Posterior cingulate gyrus (tissue), 11 donors: ENCODE measurements at regions of chr9 and their contacts with region 1.

Region 1: GRCh38 chr9:98255578-98256296 is at the start of gene TBC1D2:
- DNase-seq: peak; percentile 89 to 99 (median 93)

Region 2: DNA sequence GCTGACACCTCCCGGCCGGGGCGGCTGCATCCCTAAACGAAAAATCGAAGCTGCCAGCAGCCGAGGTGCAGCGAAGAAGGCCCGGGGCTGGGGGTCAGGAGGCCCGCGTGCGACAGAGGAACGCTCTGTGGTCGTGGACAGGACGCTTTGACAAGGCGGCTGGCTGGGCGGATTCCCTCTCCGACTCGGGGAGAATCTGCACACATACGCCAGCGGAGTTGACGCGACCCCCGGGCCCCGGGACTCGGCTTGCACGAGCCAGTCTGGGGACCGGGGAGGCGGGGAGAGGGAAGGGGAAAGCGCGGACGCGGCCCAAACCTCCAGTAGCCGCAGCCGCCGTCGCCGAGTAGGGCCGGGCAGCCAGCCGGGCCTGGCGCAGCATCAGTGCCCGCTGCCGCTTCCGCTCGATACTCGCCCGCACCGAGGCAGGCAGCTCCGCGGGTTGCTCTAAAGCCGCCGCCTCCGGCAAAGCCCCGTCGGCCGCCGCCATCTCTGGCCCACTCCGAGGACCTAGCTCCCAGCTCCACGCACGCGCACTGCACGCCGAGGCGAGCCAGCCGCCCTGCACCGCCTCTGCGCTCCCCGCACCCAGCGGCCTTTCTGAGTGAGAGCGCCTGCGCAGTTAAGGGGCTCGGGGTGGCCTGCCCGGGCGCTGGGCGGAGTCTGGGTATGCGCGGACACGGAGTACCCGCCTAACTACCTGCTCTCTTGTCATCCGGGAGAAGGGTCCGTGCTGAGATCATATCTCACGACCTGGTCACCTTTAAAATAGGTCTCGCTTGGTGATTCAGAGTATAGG is 558.7 kb before region 1 on chr9 and contains the start of gene XPA:
- intact Hi-C with region 1: loop called (anchors 10 kb)
- DNase-seq: peak; percentile 93 to 99 (median 96)

Region 3: GRCh38 chr9:98056269-98057137 is 199.2 kb before region 1 on chr9 and contains the start of gene NANS:
- intact Hi-C with region 1: loop called (anchors 5 kb)
- DNase-seq: peak; percentile 86 to 99 (median 93)